ENCODE measurements at regions of chr18 and their contacts with region 1.

Region 1: DNA sequence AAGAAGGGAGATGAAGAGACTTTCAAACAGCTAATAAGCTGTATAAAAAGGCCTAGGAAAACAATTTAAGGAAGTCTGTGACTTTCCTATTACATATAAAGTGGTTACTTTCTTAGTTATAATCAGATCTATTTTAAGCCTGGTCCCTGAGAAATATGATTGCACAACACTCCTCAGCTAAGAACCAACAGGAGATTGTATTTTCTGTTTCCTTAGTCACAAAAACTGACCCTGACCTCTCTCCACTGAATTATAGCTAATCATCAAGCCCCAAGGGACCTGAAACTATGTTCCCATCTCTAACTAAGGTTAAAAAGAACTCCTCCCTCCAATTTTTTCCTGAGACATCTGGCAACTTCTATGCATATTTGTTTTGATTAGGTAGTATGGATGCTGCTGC is 106.9 kb downstream of the ROCK1 start:
- DNase-seq: no peak
- ATAC-seq: peak; percentile 91 to 95
- H3K4me3 ChIP-seq: no peak overlapping the region
- H3K27ac ChIP-seq: no peak overlapping the region
- H3K4me1 ChIP-seq: no peaks in the 10 kb centered on the region
- H3K27me3 ChIP-seq: no peaks in the 10 kb centered on the region

Region 2: GRCh38 chr18:21074336-21075323 is 69.9 kb after region 1 on chr18:
- intact Hi-C with region 1: no loop called
- DNase-seq: no peak
- ATAC-seq: peak in 1 of 2 donors; percentile 24
- H3K4me3 ChIP-seq: no peak overlapping the region
- H3K27ac ChIP-seq: no peak overlapping the region
- H3K4me1 ChIP-seq: peaks cover 15% of the 10 kb centered on the region
- H3K27me3 ChIP-seq: no peaks in the 10 kb centered on the region

Region 3: DNA sequence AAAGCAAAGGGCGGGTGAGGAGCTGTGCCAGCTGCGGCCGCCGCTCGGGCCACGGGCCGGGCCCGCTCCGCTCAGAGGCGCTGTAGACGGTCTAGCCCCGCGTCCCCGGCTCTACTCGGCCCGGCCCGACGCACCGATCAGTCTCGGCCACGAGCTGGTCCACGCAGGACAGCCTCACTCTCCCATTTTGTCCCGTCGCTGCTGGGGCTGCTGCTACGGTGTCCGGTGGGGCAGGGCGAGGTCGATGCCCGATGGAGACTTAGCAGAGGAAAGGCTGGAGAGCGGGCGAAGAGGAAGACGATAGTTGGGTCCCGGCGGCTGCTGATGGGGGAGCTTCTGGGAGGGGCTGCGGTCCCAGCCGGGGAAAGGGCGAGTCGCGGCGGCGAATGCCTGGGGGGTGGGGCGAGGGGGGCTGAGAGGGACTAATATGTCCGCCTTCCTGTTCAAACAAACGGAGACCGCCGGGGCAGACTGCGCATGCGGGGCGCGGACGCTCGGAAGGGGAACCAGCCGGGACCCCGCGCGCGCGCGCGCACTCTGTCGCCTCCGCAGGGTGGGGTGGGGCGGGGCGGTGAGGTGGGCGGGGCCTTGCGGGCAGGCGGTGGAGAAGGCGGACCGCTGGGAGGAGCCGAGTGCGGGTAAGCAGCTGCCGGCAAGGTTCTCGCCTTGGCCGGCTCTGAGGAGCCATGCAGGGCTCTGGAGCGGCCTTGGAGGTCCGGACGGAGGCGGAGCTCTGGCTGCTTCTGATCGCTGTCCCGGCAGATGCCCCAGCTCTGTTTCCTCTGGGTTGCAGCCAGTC is 106.8 kb after region 1 on chr18 and contains the start of gene ROCK1:
- intact Hi-C with region 1: loop called in 2 of 4 experiments (anchors 10 kb)
- DNase-seq: peak; percentile 100
- ATAC-seq: peak; percentile 98
- H3K4me3 ChIP-seq: peak within 1 kb of the TSS; percentile 92
- H3K27ac ChIP-seq: peak within 1 kb of the TSS; percentile 91
- H3K4me1 ChIP-seq: no peaks in the 10 kb centered on the region
- H3K27me3 ChIP-seq: no peaks in the 10 kb centered on the region
- total RNA-seq, gene ROCK1: 30.3 to 41.6 (median 36.7) TPM